K562 (cell line): ENCODE measurements at regions of chr9 and their contacts with region 1.

Region 1: GRCh38 chr9:115591584-115591984 is 473.6 kb upstream of the TNC start:
- DNase-seq: peak; percentile 9 to 52 (median 14)
- ATAC-seq: peak; percentile 83
- H3K4me3 ChIP-seq: no peak overlapping the region
- H3K27ac ChIP-seq: no peak overlapping the region; the same call in 2 of the 3 replicates
- H3K4me1 ChIP-seq: no peaks in the 10 kb centered on the region
- H3K27me3 ChIP-seq: no peaks in the 10 kb centered on the region
- CTCF ChIP-seq: peak; percentile 37 to 68 (median 53)
- EP300 ChIP-seq: no peak
- POLR2A ChIP-seq: no peak
- RAD21 ChIP-seq: peak; percentile 71 to 77

Region 2: GRCh38 chr9:114681594-114682332 is 909.8 kb before region 1 on chr9 and contains the start of gene TEX48:
- CTCF ChIA-PET with region 1: no interaction called
- POLR2A ChIA-PET with region 1: no interaction called
- in situ Hi-C with region 1: no loop called
- intact Hi-C with region 1: loop called (anchors 10 kb)
- DNase-seq: peak; percentile 65 to 77 (median 75)
- ATAC-seq: peak; percentile 94
- H3K4me3 ChIP-seq: no peak within 1 kb of the TSS
- H3K27ac ChIP-seq: no peak within 1 kb of the TSS
- H3K4me1 ChIP-seq: peaks cover 0 to 3% of the 10 kb centered on the region in 2 experiments; a peak in 1 of 5 replicates
- H3K27me3 ChIP-seq: peaks cover 0 to under 1% of the 10 kb centered on the region in 2 experiments; a peak in 2 of 5 replicates
- CTCF ChIP-seq: peak; percentile 67 to 79 (median 78)
- EP300 ChIP-seq: no peak
- POLR2A ChIP-seq: no peak
- RAD21 ChIP-seq: peak; percentile 39 to 71
- polyA plus RNA-seq, gene TEX48: not detected

Region 3: GRCh38 chr9:115442054-115442453 is 149.5 kb before region 1 on chr9:
- CTCF ChIA-PET with region 1: no interaction called
- POLR2A ChIA-PET with region 1: no interaction called
- in situ Hi-C with region 1: no loop called
- intact Hi-C with region 1: no loop called
- DNase-seq: no peak
- ATAC-seq: no peak
- H3K4me3 ChIP-seq: no peak overlapping the region
- H3K27ac ChIP-seq: no peak overlapping the region
- H3K4me1 ChIP-seq: no peaks in the 10 kb centered on the region
- H3K27me3 ChIP-seq: no peaks in the 10 kb centered on the region
- CTCF ChIP-seq: no peak
- EP300 ChIP-seq: no peak
- POLR2A ChIP-seq: no peak
- RAD21 ChIP-seq: no peak

Region 4: DNA sequence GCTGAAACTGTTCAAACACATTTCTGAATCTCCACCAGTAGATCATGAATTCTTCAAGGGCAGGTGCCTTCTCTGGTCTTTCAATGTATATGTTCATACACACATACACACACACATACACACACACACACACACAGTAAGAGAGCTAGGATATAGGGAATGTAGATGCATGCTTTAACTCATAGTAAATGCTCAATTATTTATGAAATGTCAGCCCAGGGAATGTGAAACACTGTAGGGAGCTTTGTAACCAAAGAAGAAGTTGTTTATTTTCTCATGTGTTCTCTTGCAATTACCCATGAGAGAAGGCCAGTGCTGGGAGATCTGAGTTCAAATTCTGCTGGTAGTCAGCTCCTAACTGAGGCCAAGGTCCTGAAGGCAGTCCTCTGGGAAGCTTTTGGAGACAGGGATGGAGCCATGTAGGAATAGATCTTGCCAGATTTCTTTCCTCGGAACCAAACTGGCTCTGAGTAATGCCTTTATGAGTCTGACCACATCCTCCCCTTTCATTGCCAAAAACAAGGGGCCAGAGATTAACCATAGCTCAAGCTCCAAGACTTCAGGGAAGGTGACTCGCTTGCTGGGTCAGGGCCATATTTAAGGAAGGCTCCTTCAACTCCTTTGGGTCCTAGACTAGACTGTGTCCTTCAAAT is 13.4 kb after region 1 on chr9:
- CTCF ChIA-PET with region 1: no interaction called
- POLR2A ChIA-PET with region 1: no interaction called
- in situ Hi-C with region 1: no loop called
- intact Hi-C with region 1: no loop called
- DNase-seq: no peak
- ATAC-seq: no peak
- H3K4me3 ChIP-seq: no peak overlapping the region
- H3K27ac ChIP-seq: no peak overlapping the region
- H3K4me1 ChIP-seq: no peaks in the 10 kb centered on the region
- H3K27me3 ChIP-seq: no peaks in the 10 kb centered on the region
- CTCF ChIP-seq: no peak
- EP300 ChIP-seq: no peak
- POLR2A ChIP-seq: no peak
- RAD21 ChIP-seq: no peak

Region 5: GRCh38 chr9:115694014-115694413 is 102.4 kb after region 1 on chr9:
- CTCF ChIA-PET with region 1: no interaction called
- POLR2A ChIA-PET with region 1: no interaction called
- in situ Hi-C with region 1: no loop called
- intact Hi-C with region 1: no loop called
- DNase-seq: no peak
- ATAC-seq: no peak
- H3K4me3 ChIP-seq: no peak overlapping the region
- H3K27ac ChIP-seq: no peak overlapping the region
- H3K4me1 ChIP-seq: no peaks in the 10 kb centered on the region
- H3K27me3 ChIP-seq: no peaks in the 10 kb centered on the region
- CTCF ChIP-seq: peak in 1 of 3 experiments; percentile 11; a peak in 1 of 6 replicates
- EP300 ChIP-seq: no peak
- POLR2A ChIP-seq: no peak
- RAD21 ChIP-seq: 0 out of 4 replicates have a peak, but pooled peaks of 1 of the 2 experiments have one; percentile 8

Region 6: DNA sequence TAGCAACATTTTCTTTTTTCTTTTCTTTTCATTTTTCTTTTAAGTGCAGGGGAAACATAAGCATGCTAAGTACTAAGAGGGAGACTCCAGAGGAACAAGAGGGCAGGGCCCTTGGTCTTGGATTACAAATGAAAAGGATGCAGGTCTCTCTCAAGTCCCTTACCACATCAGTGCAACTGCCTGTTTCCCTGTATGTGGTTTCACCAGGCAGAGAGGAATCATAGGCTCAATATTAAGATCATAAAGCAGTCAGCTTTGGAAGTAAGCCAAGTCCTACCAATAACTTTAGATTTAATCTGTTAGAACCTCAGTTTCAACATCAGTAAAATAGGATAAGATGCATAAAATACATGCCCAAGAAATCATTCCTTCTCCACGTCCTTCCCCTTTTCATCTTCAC is 139.3 kb after region 1 on chr9:
- CTCF ChIA-PET with region 1: no interaction called
- POLR2A ChIA-PET with region 1: no interaction called
- in situ Hi-C with region 1: no loop called
- intact Hi-C with region 1: no loop called
- DNase-seq: no peak
- ATAC-seq: no peak
- H3K4me3 ChIP-seq: no peak overlapping the region
- H3K27ac ChIP-seq: no peak overlapping the region
- H3K4me1 ChIP-seq: no peaks in the 10 kb centered on the region
- H3K27me3 ChIP-seq: no peaks in the 10 kb centered on the region
- CTCF ChIP-seq: no peak
- EP300 ChIP-seq: no peak
- POLR2A ChIP-seq: no peak
- RAD21 ChIP-seq: no peak

Region 7: GRCh38 chr9:116149844-116150243 is 558.3 kb after region 1 on chr9:
- CTCF ChIA-PET with region 1: no interaction called
- POLR2A ChIA-PET with region 1: no interaction called
- in situ Hi-C with region 1: no loop called
- intact Hi-C with region 1: loop called (anchors 5 kb)
- DNase-seq: peak; percentile 32 to 51 (median 40)
- ATAC-seq: peak; percentile 88
- H3K4me3 ChIP-seq: no peak overlapping the region
- H3K27ac ChIP-seq: no peak overlapping the region
- H3K4me1 ChIP-seq: peaks cover 0 to 6% of the 10 kb centered on the region in 2 experiments; a peak in 1 of 5 replicates
- H3K27me3 ChIP-seq: peaks cover 3 to 5% of the 10 kb centered on the region in 2 experiments; a peak in 3 of 5 replicates
- CTCF ChIP-seq: peak; percentile 70 to 81 (median 71)
- EP300 ChIP-seq: no peak
- POLR2A ChIP-seq: no peak
- RAD21 ChIP-seq: peak; percentile 60 to 64

Region 8: GRCh38 chr9:116589392-116590354 is 998.1 kb after region 1 on chr9:
- CTCF ChIA-PET with region 1: no interaction called
- POLR2A ChIA-PET with region 1: no interaction called
- in situ Hi-C with region 1: no loop called
- intact Hi-C with region 1: loop called (anchors 5 kb)
- DNase-seq: peak; percentile 72 to 76 (median 73)
- ATAC-seq: peak; percentile 100
- H3K4me3 ChIP-seq: no peak overlapping the region
- H3K27ac ChIP-seq: no peak overlapping the region
- H3K4me1 ChIP-seq: no peaks in the 10 kb centered on the region
- H3K27me3 ChIP-seq: no peaks in the 10 kb centered on the region
- CTCF ChIP-seq: peak; percentile 89 to 98 (median 95)
- EP300 ChIP-seq: no peak; the same call in 1 of the 2 replicates
- POLR2A ChIP-seq: no peak
- RAD21 ChIP-seq: peak; percentile 48 to 82

Region 9: DNA sequence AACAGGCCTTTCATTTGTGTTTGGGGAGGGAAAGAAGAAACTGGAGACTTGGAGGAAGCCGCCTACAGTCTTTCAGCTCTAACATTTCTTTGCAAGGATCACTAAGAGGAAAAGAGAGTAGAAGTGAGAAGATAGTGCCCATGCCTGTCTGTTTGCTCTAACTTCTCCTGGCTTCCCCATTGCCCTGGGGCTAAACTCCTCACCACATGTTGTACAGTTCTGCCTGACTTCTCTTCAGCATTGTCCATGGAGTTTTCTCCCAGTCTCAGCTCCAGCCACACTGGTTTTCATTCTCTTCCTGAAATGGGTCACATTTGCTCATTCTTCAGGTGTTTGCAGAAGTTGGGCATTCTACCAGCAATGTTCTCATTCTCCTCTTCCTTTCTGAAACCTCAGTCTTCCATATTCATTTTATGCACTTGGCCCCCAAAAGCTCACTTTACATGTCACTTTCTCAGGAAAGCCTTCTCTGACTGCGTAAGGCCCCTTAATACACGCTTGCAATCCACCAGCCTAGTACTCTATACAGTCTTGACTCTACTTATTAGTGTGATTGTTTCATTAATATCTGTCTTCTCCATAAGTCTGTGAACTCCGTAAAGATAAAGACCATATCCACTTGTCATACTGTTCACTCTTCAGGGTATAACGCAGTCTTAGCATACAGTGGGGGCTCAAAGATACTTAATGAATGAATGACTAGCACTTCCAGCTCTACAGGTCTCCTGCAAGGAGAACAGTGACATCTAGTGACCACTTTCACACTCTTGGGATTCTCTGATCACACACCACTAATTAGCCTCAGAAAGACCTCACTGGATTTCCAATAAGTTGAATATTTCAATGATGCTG is 1055.3 kb after region 1 on chr9:
- CTCF ChIA-PET with region 1: interaction called, 4 read pairs
- POLR2A ChIA-PET with region 1: no interaction called
- in situ Hi-C with region 1: no loop called
- intact Hi-C with region 1: loop called (anchors 5 kb)
- DNase-seq: peak in 3 of 4 experiments; percentile 9 to 40 (median 18)
- ATAC-seq: peak; percentile 88
- H3K4me3 ChIP-seq: no peak overlapping the region
- H3K27ac ChIP-seq: no peak overlapping the region
- H3K4me1 ChIP-seq: no peaks in the 10 kb centered on the region
- H3K27me3 ChIP-seq: no peaks in the 10 kb centered on the region
- CTCF ChIP-seq: peak; percentile 47 to 68 (median 58)
- EP300 ChIP-seq: no peak
- POLR2A ChIP-seq: no peak
- RAD21 ChIP-seq: peak; percentile 72 to 74

Region 10: GRCh38 chr9:116661037-116661954 is 1069.7 kb after region 1 on chr9:
- CTCF ChIA-PET with region 1: interaction called, 19 read pairs
- POLR2A ChIA-PET with region 1: no interaction called
- in situ Hi-C with region 1: no loop called
- intact Hi-C with region 1: loop called (anchors 2 kb)
- DNase-seq: peak; percentile 47 to 62 (median 54)
- ATAC-seq: peak; percentile 91
- H3K4me3 ChIP-seq: no peak overlapping the region
- H3K27ac ChIP-seq: no peak overlapping the region
- H3K4me1 ChIP-seq: no peaks in the 10 kb centered on the region
- H3K27me3 ChIP-seq: no peaks in the 10 kb centered on the region
- CTCF ChIP-seq: peak; percentile 63 to 83 (median 70)
- EP300 ChIP-seq: no peak
- POLR2A ChIP-seq: no peak
- RAD21 ChIP-seq: peak; percentile 79 to 80